ENCODE measurements at regions of chr12 and their contacts with region 1.

Region 1: DNA sequence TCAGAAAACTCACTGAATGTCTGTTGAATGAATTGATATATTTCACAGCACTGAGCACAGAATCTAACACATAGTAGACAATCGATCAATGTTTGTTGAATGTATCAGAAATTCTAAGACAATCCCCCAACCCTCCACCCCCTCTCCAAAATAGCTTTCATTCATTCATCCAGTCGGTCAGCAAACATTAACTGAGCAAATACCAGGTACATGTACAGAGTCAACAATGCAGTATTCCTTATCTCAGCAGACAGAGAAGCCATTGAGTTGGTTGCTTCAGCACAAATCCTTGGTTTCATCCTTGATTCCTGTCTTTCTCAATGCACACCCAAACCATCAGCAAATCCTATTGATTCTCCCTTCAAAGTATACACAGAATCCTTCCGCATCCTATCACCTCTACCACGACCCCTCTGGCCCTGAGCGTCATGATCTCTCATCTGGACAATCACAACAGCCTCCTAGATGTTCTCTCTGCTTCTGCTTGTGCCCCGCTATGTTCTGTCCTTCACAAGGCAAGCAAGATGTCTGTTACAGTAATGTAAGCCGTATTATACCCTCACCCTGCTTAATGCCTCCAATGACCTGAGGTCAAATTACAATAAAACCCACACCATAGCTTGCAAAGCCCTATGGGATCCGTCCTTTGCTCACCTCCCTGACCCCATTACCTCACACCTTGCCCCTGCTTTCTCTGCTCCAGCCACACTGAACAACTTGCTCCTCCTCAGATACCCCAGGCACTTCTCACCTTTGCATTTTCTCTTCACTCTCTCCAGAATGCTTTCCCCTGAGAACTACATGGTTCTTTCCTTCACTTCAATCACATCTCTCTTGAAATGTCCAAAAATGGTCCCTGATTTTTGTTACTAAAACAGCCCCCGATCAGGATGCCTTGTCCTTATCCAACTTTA is 738.1 kb upstream of the TBX3 start:
- DNase-seq: no peak
- ATAC-seq: no peak
- H3K4me3 ChIP-seq: no peak overlapping the region
- H3K4me3 Mint-ChIP-seq: no peak overlapping the region
- H3K27ac ChIP-seq: no peak overlapping the region
- H3K27ac Mint-ChIP-seq: no peak overlapping the region
- H3K4me1 ChIP-seq: no peaks in the 10 kb centered on the region
- H3K4me1 Mint-ChIP-seq: no peaks in the 10 kb centered on the region
- H3K27me3 ChIP-seq: no peaks in the 10 kb centered on the region
- H3K27me3 Mint-ChIP-seq: peaks cover 0 to 7% (median 0%) of the 10 kb centered on the region in 5 donors

Region 2: GRCh38 chr12:115456946-115457689 is 35.1 kb after region 1 on chr12:
- CTCF ChIA-PET with region 1: no interaction called
- POLR2A ChIA-PET with region 1: no interaction called
- intact Hi-C with region 1: loop called in 1 of 2 experiments (anchors 1 kb)
- DNase-seq: no peak
- ATAC-seq: no peak
- H3K4me3 ChIP-seq: no peak overlapping the region
- H3K4me3 Mint-ChIP-seq: no peak overlapping the region
- H3K27ac ChIP-seq: no peak overlapping the region
- H3K27ac Mint-ChIP-seq: no peak overlapping the region
- H3K4me1 ChIP-seq: no peaks in the 10 kb centered on the region
- H3K4me1 Mint-ChIP-seq: peaks cover 0 to 6% (median 5%) of the 10 kb centered on the region in 7 donors
- H3K27me3 ChIP-seq: no peaks in the 10 kb centered on the region
- H3K27me3 Mint-ChIP-seq: peaks cover 12 to 18% (median 16%) of the 10 kb centered on the region in 5 donors

Measured in naive thymus-derived CD4-positive, alpha-beta T cell (primary cell).